Activated B cell treated with CpG ODN at 0.5 μM for 24 hours (primary cell): ENCODE measurements at regions of chr4 and their contacts with region 1.

Region 1: GRCh38 chr4:88284439-88285234 is at the start of gene PPM1K:
- DNase-seq: peak; percentile 99
- ATAC-seq: peak; percentile 81
- H3K4me3 Mint-ChIP-seq: peak within 1 kb of the TSS; percentile 98
- H3K27ac Mint-ChIP-seq: peak within 1 kb of the TSS; percentile 99
- H3K4me1 Mint-ChIP-seq: peaks cover 54% of the 10 kb centered on the region
- H3K27me3 Mint-ChIP-seq: no peaks in the 10 kb centered on the region
- CTCF ChIP-seq: no peak
- total RNA-seq, gene PPM1K: 72.1 and 76.6 TPM in 2 replicates

Region 2: DNA sequence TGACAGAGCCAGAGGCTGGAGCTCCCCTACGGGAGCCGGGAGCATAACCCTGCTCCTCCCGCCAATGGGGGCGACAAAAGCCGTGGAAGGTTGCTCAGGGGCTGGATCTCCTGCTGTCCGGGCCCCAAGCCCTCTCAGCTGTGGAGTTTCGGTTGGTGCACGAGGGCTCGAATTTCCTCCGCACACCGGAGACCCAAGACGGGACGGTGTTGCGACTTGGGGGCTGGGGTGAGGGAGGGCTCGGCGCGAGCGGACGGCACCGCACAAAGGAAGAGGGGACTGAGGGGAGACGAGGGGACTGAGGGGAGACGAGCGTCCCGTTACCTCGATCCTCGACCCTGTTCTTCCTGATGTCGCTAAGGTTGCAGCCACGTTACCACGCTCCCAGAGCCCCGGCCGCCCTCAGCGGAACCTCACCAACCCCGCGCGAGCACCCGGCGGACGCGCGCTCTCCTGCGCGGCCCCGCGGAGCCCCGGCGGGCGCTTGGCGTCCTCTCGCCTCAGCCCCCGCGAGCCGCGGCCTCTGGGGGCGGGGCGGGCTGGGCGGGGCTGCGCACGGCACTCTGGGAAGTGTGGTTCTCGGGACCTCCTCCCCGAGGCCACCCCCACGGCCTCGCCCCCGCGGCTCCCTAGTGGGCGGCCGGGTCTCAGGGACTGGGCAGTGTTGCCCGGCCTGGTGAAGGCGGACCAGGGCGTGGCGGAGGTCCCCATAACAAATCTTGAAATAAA is 1064.4 kb before region 1 on chr4 and contains the start of gene KLHL8:
- CTCF ChIA-PET with region 1: no interaction called
- POLR2A ChIA-PET with region 1: no interaction called
- intact Hi-C with region 1: loop called (anchors 5 kb)
- DNase-seq: peak; percentile 93
- ATAC-seq: peak; percentile 92
- H3K4me3 Mint-ChIP-seq: peak within 1 kb of the TSS; percentile 95
- H3K27ac Mint-ChIP-seq: peak within 1 kb of the TSS; percentile 93
- H3K4me1 Mint-ChIP-seq: peaks cover 17% of the 10 kb centered on the region
- H3K27me3 Mint-ChIP-seq: no peaks in the 10 kb centered on the region
- CTCF ChIP-seq: no peak
- total RNA-seq, gene KLHL8: 10.5 and 12.6 TPM in 2 replicates

Region 3: DNA sequence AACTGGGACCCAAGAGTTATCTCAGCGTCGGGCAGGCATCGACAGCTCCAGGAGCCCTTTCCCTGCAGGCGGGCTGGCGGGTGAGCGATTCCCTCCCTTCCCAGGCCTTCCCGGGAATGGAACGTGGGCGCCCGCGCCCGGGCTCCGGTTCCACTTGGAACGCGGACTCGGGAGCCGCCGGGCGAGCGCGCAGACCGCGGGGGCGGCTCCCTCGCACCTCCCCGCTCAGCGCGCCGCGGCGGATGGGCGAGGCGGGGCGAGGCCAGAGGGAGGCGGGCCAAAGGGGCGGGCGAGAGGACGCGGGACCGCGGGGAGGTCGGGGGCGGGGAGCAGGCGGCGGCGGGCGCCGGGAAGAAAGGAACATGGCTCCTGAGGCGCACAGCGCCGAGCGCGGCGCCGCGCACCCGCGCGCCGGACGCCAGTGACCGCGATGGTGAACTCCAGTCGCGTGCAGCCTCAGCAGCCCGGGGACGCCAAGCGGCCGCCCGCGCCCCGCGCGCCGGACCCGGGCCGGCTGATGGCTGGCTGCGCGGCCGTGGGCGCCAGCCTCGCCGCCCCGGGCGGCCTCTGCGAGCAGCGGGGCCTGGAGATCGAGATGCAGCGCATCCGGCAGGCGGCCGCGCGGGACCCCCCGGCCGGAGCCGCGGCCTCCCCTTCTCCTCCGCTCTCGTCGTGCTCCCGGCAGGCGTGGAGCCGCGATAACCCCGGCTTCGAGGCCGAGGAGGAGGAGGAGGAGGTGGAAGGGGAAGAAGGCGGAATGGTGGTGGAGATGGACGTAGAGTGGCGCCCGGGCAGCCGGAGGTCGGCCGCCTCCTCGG is 277.1 kb before region 1 on chr4 and contains the start of gene PKD2:
- CTCF ChIA-PET with region 1: no interaction called
- POLR2A ChIA-PET with region 1: no interaction called
- intact Hi-C with region 1: loop called (anchors 1 kb)
- DNase-seq: peak; percentile 61
- ATAC-seq: peak; percentile 94
- H3K4me3 Mint-ChIP-seq: peak within 1 kb of the TSS; percentile 87
- H3K27ac Mint-ChIP-seq: peak within 1 kb of the TSS; percentile 47
- H3K4me1 Mint-ChIP-seq: peaks cover 23% of the 10 kb centered on the region
- H3K27me3 Mint-ChIP-seq: peaks cover 4% of the 10 kb centered on the region
- CTCF ChIP-seq: no peak
- total RNA-seq, gene PKD2: 4.2 and 6.2 TPM in 2 replicates

Region 4: GRCh38 chr4:88320780-88321373 is 36.2 kb after region 1 on chr4:
- CTCF ChIA-PET with region 1: interaction called, 18 read pairs
- POLR2A ChIA-PET with region 1: interaction called, 100 read pairs
- intact Hi-C with region 1: loop called (anchors 1 kb)
- DNase-seq: peak; percentile 33
- ATAC-seq: peak; percentile 99
- H3K4me3 Mint-ChIP-seq: peak overlapping the region; percentile 80
- H3K27ac Mint-ChIP-seq: peak overlapping the region; percentile 97
- H3K4me1 Mint-ChIP-seq: peaks cover 35% of the 10 kb centered on the region
- H3K27me3 Mint-ChIP-seq: no peaks in the 10 kb centered on the region
- CTCF ChIP-seq: no peak

Region 5: GRCh38 chr4:88514557-88515511 is 230.2 kb after region 1 on chr4:
- CTCF ChIA-PET with region 1: interaction called, 4 read pairs
- POLR2A ChIA-PET with region 1: interaction called, 14 read pairs
- intact Hi-C with region 1: no loop called
- DNase-seq: no peak
- ATAC-seq: no peak
- H3K4me3 Mint-ChIP-seq: no peak overlapping the region
- H3K27ac Mint-ChIP-seq: no peak overlapping the region
- H3K4me1 Mint-ChIP-seq: no peaks in the 10 kb centered on the region
- H3K27me3 Mint-ChIP-seq: no peaks in the 10 kb centered on the region
- CTCF ChIP-seq: no peak

Region 6: DNA sequence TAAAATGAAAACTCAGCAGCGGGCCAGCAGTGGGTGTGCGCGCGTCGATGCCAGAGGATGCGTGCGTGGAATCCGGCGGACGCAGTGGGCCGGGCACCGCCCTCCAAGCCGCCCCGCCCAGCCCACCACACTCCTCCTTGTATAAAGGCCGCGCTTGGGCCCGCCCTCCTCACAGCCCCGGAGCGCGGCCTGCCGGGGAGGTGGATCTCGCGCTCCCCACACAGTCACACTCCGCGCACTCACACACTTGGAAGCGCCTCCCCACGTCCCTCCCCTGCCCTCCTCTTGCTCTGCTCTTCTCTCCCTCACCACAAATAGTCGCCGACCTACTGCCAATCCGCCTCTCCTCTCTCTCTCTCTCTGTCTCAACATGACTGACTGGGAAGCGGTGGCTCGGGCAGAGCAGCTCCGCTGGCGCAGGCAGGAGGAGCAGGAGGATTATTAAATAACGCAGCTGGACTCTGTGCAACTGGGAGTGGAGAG is 1842.6 kb after region 1 on chr4 and contains the start of gene CCSER1:
- CTCF ChIA-PET with region 1: no interaction called
- POLR2A ChIA-PET with region 1: no interaction called
- intact Hi-C with region 1: loop called (anchors 2 kb)
- DNase-seq: peak; percentile 78
- ATAC-seq: peak; percentile 89
- H3K4me3 Mint-ChIP-seq: peak within 1 kb of the TSS; percentile 96
- H3K27ac Mint-ChIP-seq: peak within 1 kb of the TSS; percentile 95
- H3K4me1 Mint-ChIP-seq: peaks cover 21% of the 10 kb centered on the region
- H3K27me3 Mint-ChIP-seq: peaks cover 2% of the 10 kb centered on the region
- CTCF ChIP-seq: no peak
- total RNA-seq, gene CCSER1: 14.4 and 20.1 TPM in 2 replicates